Activated T-helper 1 cell treated with anti-CD3 and anti-CD28 coated beads, Interleukin-12 subunit alpha, Interleukin-12 subunit beta, Interleukin-2, Interleukin-4 antibody, amounts not matched to agents 30 ng/mL and 10 ng/mL and 1 ng/mL, durations not matched to agents 14 hours and 24 hours and 36 hours (primary cell): ENCODE measurements at regions of chr1 and their contacts with region 1.

Region 1: GRCh38 chr1:155063550-155064110 is at the start of gene EFNA4:
- DNase-seq: peak; percentile 83
- H3K4me3 Mint-ChIP-seq: peak within 1 kb of the TSS; percentile 93
- H3K27ac Mint-ChIP-seq: peak within 1 kb of the TSS; percentile 79
- H3K4me1 Mint-ChIP-seq: peaks cover 31% of the 10 kb centered on the region
- H3K27me3 Mint-ChIP-seq: no peaks in the 10 kb centered on the region
- total RNA-seq, gene EFNA4: 5.7 and 6.8 TPM in 2 replicates

Region 2: GRCh38 chr1:154607609-154608396 is 455.8 kb before region 1 on chr1 and contains the start of gene ADAR:
- intact Hi-C with region 1: loop called (anchors 5 kb)
- DNase-seq: peak; percentile 93
- H3K4me3 Mint-ChIP-seq: peak within 1 kb of the TSS; percentile 94
- H3K27ac Mint-ChIP-seq: peak within 1 kb of the TSS; percentile 98
- H3K4me1 Mint-ChIP-seq: peaks cover 68% of the 10 kb centered on the region
- H3K27me3 Mint-ChIP-seq: no peaks in the 10 kb centered on the region
- total RNA-seq, gene ADAR: 299 and 301 TPM in 2 replicates

Region 3: DNA sequence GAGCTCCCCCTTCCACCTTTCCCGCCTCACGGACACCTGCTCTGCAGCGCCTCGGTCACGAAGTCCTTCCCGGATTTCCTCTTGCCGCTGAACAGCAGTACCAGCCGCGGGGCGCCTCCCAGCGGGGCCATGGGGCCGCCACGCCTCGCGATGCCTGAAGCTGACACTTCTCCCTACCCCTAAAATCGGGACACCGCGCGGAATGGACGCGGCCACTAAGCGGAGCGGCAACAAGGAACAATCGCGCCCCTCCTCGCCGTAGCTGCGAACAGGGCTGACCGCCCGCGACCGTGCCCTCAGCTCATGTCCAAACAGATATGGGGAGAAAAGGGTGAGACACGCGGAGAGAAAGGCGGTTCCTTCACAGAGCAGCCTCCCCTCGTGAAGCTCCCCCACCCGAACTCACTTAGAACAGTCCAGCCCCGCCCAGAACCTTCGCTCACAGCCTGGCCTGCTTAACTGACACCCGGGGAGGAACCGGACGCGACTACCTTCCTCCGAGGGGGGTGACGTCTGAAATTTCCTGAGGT is 127.0 kb before region 1 on chr1 and contains the start of gene PMVK:
- intact Hi-C with region 1: loop called (anchors 1 kb)
- DNase-seq: peak; percentile 92
- H3K4me3 Mint-ChIP-seq: peak within 1 kb of the TSS; percentile 93
- H3K27ac Mint-ChIP-seq: peak within 1 kb of the TSS; percentile 95
- H3K4me1 Mint-ChIP-seq: peaks cover 53% of the 10 kb centered on the region
- H3K27me3 Mint-ChIP-seq: no peaks in the 10 kb centered on the region
- total RNA-seq, gene PMVK: 42.5 and 43.3 TPM in 2 replicates

Region 4: DNA sequence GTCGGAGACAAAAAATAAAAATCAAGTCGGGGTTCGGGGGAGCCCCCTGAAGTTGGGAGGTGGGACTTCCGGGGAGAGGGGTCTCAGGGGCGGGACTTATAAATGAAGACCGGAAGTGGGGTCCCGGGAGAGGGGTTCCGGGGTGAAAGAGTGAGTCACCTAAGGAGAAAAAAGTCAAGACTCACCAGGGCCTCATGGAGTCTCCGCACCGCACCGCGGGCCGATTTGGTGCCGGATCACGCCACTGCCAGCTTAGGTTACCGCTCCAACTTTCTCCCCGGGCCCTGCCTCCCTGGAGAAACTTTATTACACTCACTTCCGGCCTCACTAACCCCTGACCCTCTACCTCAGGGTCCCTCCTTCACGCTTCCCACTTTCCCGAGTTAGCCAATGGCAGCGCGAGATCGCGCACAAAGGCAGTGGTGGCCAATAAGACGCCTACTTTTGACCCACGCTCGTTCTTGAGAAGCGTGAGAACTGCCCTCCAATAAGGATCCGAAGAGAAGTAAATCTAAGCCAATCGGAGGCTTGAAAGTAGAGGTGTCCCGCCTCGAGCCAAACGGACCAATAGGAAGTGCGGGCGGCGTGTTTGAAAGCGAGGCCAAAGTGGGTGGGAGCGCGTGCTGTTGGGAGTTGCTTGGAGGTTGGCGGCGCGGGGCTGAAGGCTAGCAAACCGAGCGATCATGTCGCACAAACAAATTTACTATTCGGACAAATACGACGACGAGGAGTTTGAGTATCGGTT is 89.4 kb before region 1 on chr1 and contains the start of gene CKS1B:
- intact Hi-C with region 1: loop called (anchors 1 kb)
- DNase-seq: peak; percentile 95
- H3K4me3 Mint-ChIP-seq: no peak within 1 kb of the TSS
- H3K27ac Mint-ChIP-seq: no peak within 1 kb of the TSS
- H3K4me1 Mint-ChIP-seq: peaks cover 36% of the 10 kb centered on the region
- H3K27me3 Mint-ChIP-seq: no peaks in the 10 kb centered on the region
- total RNA-seq, gene CKS1B: 151 and 158 TPM in 2 replicates

Region 5: DNA sequence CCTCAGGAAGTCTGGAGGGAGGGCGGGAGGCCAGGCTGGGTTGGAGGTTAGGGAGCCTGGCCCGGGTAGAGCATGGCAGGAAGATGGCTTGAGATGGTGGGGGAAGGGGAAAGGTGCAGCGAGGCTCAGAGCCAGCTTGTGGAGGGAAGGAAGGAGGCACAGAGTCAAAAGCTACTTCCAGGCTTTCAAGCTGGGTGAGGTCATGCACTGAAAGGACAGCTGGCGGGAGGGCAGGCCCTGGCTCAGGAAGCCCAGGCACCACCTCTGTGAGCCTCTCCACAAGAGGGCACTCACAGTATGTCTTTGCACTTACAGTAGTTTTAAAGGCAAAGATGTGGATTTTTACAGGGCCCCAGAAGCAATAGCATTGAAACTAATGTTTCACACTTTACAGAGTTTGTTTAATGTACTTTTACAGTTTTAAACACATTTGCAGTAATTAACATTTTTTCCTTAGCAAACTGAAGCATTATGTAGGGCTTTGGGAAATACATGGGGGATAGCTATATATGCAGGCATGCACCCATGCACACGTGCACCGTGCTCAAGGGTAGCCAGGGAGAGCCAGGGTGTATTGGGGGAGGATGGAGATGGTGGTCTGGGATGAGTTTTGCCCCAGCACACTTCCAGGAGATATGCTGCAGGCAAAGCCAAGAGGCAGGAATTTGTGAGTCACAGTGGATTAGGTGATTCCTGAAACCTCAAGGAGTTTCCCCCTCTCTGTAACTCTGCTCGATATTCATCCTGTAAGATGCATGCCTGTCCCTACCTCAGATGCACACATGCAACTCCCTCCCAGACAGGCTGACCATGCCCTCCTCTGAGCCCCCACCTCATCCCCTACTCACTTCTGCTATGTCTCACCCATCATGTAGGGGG is 18.6 kb before region 1 on chr1:
- intact Hi-C with region 1: loop called (anchors 1 kb)
- DNase-seq: peak; percentile 59
- H3K4me3 Mint-ChIP-seq: no peak overlapping the region
- H3K27ac Mint-ChIP-seq: no peak overlapping the region
- H3K4me1 Mint-ChIP-seq: peaks cover 22% of the 10 kb centered on the region
- H3K27me3 Mint-ChIP-seq: peaks cover 8% of the 10 kb centered on the region

Region 6: DNA sequence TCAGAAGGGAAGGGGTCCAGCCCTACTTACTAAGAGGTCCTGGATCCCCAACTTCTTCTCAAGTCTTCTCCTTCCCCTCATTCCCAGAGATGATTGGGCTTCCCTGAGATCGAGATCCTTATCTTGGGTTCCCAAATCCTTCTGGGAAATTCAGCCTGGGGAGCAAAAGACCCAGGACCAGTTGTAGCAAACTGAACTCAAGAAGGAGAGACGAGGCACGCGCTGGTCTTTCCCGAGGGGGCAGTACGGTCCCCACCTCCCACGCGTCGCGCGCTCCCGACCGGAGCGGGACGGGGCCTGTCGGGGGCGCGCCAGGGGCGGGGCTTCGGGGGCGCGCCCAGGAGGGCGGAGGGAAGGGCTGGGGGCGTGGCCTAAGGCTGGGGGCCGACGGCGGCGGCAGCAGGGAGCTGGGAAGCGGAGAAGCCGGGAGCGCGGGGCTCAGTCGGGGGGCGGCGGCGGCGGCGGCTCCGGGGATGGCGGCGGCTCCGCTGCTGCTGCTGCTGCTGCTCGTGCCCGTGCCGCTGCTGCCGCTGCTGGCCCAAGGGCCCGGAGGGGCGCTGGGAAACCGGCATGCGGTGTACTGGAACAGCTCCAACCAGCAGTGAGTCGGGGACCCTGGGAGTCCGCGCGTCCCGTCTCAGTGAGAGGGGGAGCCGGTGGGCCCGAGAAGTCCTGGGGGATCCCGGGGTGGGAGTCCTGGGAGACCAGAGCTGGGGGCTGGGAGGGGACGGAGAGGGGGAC is 15.0 kb after region 1 on chr1 and contains the start of gene EFNA3:
- intact Hi-C with region 1: loop called (anchors 1 kb)
- DNase-seq: peak; percentile 61
- H3K4me3 Mint-ChIP-seq: peak within 1 kb of the TSS; percentile 67
- H3K27ac Mint-ChIP-seq: peak within 1 kb of the TSS; percentile 0
- H3K4me1 Mint-ChIP-seq: peaks cover 37% of the 10 kb centered on the region
- H3K27me3 Mint-ChIP-seq: peaks cover 49% of the 10 kb centered on the region
- total RNA-seq, gene EFNA3: 2.8 and 3.0 TPM in 2 replicates

Region 7: GRCh38 chr1:155135415-155136028 is 71.9 kb after region 1 on chr1 and contains the start of gene SLC50A1:
- intact Hi-C with region 1: loop called (anchors 2 kb)
- DNase-seq: peak; percentile 91
- H3K4me3 Mint-ChIP-seq: peak within 1 kb of the TSS; percentile 94
- H3K27ac Mint-ChIP-seq: peak within 1 kb of the TSS; percentile 99
- H3K4me1 Mint-ChIP-seq: peaks cover 42% of the 10 kb centered on the region
- H3K27me3 Mint-ChIP-seq: peaks cover 5% of the 10 kb centered on the region
- total RNA-seq, gene SLC50A1: 45.7 and 47.7 TPM in 2 replicates

Region 8: DNA sequence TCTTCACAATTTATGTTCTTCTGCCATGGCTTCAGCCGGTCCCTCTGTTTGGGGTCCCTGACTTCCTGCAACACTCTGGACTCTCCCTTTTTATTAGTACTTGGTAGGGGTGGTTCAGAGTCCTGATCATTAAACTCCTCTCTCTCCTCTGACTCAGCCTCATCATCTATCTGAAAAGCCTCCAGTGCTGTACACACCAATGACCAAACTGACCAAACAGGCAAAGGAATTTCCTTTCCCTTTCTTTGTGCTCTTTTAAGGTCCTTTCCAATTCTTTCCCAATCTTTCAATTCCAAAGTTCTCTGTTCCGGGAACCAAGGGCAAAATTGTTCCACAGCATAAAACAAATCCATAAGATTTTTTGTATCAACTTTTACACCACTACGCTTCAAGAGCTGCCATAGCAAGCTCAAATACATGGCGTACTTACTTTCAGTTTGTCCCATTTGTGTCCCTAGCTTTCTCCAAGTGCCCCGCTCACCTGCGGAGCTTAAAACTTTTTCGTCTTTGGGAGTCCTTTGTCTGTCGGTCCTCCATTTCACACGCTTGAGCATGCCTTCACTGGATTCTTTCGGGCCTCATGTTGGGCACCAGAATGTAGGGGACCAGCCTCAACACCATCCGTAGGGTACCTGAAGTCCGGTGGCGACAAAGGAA is 634.9 kb after region 1 on chr1:
- intact Hi-C with region 1: no loop called
- DNase-seq: no peak
- H3K4me3 Mint-ChIP-seq: no peak overlapping the region
- H3K27ac Mint-ChIP-seq: no peak overlapping the region
- H3K4me1 Mint-ChIP-seq: peaks cover 28% of the 10 kb centered on the region
- H3K27me3 Mint-ChIP-seq: no peaks in the 10 kb centered on the region